ENCODE measurements at regions of chr18 and their contacts with region 1.

Region 1: GRCh38 chr18:4068552-4069158 is 386.5 kb downstream of the DLGAP1 start:
- DNase-seq: peak; percentile 51
- ATAC-seq: peak; percentile 85
- H3K4me3 ChIP-seq: no peak overlapping the region
- H3K27ac ChIP-seq: no peak overlapping the region
- H3K4me1 ChIP-seq: no peaks in the 10 kb centered on the region
- H3K27me3 ChIP-seq: no peaks in the 10 kb centered on the region
- CTCF ChIP-seq: peak; percentile 31 to 77 (median 72); a peak in 5 of 6 replicates
- POLR2A ChIP-seq: no peak
- RAD21 ChIP-seq: peak; percentile 55

Region 2: GRCh38 chr18:4017480-4017879 is 51.2 kb before region 1 on chr18:
- CTCF ChIA-PET with region 1: no interaction called
- POLR2A ChIA-PET with region 1: no interaction called
- RAD21 ChIA-PET with region 1: no interaction called
- intact Hi-C with region 1: loop called (anchors 5 kb)
- DNase-seq: peak; percentile 38
- ATAC-seq: peak; percentile 98
- H3K4me3 ChIP-seq: no peak overlapping the region
- H3K27ac ChIP-seq: no peak overlapping the region
- H3K4me1 ChIP-seq: no peaks in the 10 kb centered on the region
- H3K27me3 ChIP-seq: no peaks in the 10 kb centered on the region
- CTCF ChIP-seq: peak; percentile 48 to 66 (median 53); a peak in 5 of 6 replicates
- POLR2A ChIP-seq: no peak
- RAD21 ChIP-seq: peak; percentile 48

Measured in HCT116 (cell line).